Head of caudate nucleus (tissue), 42 donors: ENCODE measurements at regions of chr3 and their contacts with region 1.

Region 1: GRCh38 chr3:132641837-132642538 is 17.6 kb downstream of the ACAD11 start:
- DNase-seq: no peak

Region 2: GRCh38 chr3:132535575-132536441 is 106.2 kb before region 1 on chr3:
- intact Hi-C with region 1: loop called (anchors 5 kb)
- DNase-seq: peak in 38 of 42 donors; percentile 8 to 87 (median 62)

Region 3: DNA sequence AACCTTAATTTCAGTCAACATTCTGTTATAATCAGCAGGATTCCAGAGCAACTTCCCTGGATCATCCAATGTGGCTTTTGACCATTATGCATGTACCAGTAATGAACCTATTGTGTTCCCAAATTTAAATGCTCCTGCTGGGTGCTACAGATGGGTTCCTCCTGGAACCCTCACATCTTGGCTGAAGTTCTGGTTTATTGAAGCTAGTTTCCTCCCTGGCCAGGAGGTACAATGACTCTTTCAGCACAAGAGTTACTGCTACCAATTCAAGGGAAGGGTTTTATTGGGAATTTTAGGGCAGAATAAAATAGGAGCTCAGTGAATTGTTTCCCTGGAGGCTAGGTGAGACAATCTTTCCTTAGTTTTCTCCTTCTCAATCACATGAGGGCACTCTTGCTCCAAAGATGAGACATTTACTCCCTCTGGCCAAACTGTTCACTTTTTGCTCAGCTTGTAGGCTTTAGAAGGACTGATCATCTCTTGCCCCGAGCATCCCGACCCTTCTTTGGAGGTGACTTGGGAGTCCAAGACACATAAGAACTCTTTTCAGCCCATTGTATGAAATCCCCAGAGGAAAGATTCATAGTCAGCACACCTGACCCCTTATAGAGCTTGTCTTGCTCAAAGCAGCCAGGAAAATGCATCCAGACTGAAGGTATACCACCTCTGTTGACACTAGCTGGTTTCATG is 89.0 kb after region 1 on chr3:
- intact Hi-C with region 1: no loop called
- DNase-seq: peak in 13 of 42 donors; percentile 14 to 70 (median 29)